Calu3 (cell line): ENCODE measurements at regions of chr17 and their contacts with region 1.

Region 1: GRCh38 chr17:40098846-40099618 is 1.4 kb downstream of the NR1D1 start:
- DNase-seq: peak; percentile 100
- H3K4me3 Mint-ChIP-seq: peak overlapping the region; percentile 80
- H3K27ac Mint-ChIP-seq: peak overlapping the region; percentile 85
- H3K4me1 Mint-ChIP-seq: peaks cover 73% of the 10 kb centered on the region
- H3K27me3 Mint-ChIP-seq: no peaks in the 10 kb centered on the region
- CTCF ChIP-seq: no peak

Region 2: DNA sequence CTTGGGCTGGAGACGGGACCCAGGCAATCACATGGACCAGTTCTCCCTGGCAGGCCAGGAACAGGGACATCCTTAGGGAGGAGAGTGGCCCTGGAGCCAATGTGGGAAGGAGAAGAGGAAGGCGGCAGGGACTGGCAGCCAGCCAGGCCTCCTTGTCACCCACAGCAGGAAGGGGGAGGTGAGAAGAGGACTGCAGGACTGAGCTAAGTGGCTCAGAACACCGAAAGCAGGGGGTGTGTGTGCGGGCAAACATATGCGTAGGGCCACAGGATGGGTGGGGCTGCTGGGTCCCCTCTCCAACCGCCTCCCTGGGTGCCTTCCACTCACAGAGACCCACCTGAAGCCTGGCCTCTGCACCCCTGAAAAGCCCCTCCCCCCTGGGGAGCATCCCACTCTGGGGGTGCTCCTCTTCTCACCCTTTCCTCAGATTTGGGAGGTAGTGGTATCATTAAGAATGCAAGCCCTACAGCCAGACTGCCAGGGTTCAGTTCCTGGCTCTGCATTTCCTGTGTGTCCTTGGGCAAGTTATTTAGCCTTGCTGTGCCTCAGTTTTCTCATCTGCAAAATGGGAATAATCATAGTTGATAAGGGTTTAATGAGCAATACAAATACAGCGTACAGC is 422.7 kb before region 1 on chr17:
- CTCF ChIA-PET with region 1: interaction called, 11 read pairs
- intact Hi-C with region 1: no loop called
- DNase-seq: peak; percentile 100
- H3K4me3 Mint-ChIP-seq: peak overlapping the region; percentile 3
- H3K27ac Mint-ChIP-seq: peak overlapping the region; percentile 62
- H3K4me1 Mint-ChIP-seq: peaks cover 91% of the 10 kb centered on the region
- H3K27me3 Mint-ChIP-seq: peaks cover 6% of the 10 kb centered on the region
- CTCF ChIP-seq: no peak

Region 3: DNA sequence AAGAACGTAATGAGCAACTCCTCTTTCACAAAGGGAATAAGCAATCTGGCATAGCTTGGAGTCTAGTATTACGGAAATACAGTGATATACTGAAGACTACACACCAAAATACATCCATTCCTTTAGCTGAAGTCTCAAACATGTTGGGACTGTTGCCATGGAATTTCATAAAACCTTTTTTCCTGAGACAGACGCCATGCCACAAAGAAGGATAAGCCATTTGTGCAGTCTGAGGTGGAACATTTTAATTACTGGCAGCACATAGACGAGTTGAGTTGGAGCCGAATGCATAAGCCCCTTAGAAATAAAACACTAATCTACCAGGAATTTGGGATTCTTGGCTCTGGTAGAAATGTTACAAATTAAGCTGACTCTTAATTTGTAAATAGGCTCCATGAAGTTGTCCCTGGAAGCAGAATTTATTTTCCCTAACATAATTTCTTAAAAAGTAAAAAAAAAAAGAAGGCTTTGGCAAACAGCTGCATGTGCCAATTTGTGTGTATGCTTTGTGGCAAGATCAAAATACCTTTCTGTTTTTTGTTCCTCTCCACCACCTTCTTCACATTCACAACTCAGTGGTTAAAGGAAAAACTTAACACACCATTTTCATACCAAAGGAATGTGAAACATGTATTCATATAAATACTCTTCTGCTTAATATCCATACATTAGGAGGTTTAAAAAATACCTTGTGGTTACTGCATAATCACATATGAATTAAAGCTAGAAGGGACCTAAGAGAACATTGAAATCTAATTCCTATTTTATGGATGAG is 335.8 kb before region 1 on chr17:
- CTCF ChIA-PET with region 1: no interaction called
- intact Hi-C with region 1: no loop called
- DNase-seq: no peak
- H3K4me3 Mint-ChIP-seq: no peak overlapping the region
- H3K27ac Mint-ChIP-seq: no peak overlapping the region
- H3K4me1 Mint-ChIP-seq: peaks cover 12% of the 10 kb centered on the region
- H3K27me3 Mint-ChIP-seq: peaks cover 26% of the 10 kb centered on the region
- CTCF ChIP-seq: no peak

Region 4: DNA sequence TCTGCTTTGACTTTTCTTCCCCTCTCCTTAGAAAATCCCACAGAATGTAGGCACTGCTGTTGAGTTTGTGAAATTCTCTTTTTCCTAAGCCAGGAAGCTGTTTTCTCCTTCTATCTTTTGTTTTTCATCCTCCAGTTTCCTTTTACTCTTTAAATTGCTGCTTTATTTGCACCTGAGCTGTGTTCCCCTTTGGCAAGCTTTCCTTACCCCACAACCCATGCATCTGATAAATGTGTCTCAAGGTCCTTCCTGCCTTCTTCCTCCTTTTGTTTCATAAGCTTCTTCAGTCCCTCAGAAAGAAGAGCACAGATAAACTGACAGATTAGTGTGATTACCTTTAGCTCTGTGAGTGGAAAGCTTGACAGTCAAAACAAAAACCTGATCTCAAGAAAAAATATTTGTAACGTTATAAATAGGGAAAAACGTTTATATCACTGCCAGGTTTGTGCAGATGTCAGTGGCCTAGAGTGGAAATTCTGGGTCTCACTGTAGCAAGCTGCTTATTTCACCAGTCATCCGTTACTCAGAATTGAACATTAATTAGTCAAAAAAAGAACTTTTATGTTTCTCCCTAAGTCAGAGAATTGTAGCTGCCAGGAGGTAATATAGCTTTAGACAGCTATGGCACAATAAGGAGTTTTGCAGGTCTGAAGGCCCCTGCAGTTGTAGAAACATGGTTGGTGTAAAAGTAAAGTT is 204.2 kb before region 1 on chr17:
- CTCF ChIA-PET with region 1: interaction called, 10 read pairs
- intact Hi-C with region 1: no loop called
- DNase-seq: peak; percentile 63
- H3K4me3 Mint-ChIP-seq: no peak overlapping the region
- H3K27ac Mint-ChIP-seq: no peak overlapping the region
- H3K4me1 Mint-ChIP-seq: peaks cover 23% of the 10 kb centered on the region
- H3K27me3 Mint-ChIP-seq: peaks cover 15% of the 10 kb centered on the region
- CTCF ChIP-seq: no peak

Region 5: GRCh38 chr17:40026816-40027613 is 72.0 kb before region 1 on chr17:
- CTCF ChIA-PET with region 1: interaction called, 49 read pairs
- intact Hi-C with region 1: no loop called
- DNase-seq: peak; percentile 100
- H3K4me3 Mint-ChIP-seq: no peak overlapping the region
- H3K27ac Mint-ChIP-seq: no peak overlapping the region
- H3K4me1 Mint-ChIP-seq: peaks cover 30% of the 10 kb centered on the region
- H3K27me3 Mint-ChIP-seq: no peaks in the 10 kb centered on the region
- CTCF ChIP-seq: no peak

Region 6: GRCh38 chr17:40062329-40063186 is 36.5 kb before region 1 on chr17 and contains the start of gene THRA:
- CTCF ChIA-PET with region 1: interaction called, 1,006 read pairs
- intact Hi-C with region 1: no loop called
- DNase-seq: peak; percentile 100
- H3K4me3 Mint-ChIP-seq: peak within 1 kb of the TSS; percentile 54
- H3K27ac Mint-ChIP-seq: peak within 1 kb of the TSS; percentile 27
- H3K4me1 Mint-ChIP-seq: peaks cover 55% of the 10 kb centered on the region
- H3K27me3 Mint-ChIP-seq: peaks cover 52% of the 10 kb centered on the region
- CTCF ChIP-seq: no peak
- total RNA-seq, gene THRA: 107 and 133 TPM in 2 replicates

Region 7: DNA sequence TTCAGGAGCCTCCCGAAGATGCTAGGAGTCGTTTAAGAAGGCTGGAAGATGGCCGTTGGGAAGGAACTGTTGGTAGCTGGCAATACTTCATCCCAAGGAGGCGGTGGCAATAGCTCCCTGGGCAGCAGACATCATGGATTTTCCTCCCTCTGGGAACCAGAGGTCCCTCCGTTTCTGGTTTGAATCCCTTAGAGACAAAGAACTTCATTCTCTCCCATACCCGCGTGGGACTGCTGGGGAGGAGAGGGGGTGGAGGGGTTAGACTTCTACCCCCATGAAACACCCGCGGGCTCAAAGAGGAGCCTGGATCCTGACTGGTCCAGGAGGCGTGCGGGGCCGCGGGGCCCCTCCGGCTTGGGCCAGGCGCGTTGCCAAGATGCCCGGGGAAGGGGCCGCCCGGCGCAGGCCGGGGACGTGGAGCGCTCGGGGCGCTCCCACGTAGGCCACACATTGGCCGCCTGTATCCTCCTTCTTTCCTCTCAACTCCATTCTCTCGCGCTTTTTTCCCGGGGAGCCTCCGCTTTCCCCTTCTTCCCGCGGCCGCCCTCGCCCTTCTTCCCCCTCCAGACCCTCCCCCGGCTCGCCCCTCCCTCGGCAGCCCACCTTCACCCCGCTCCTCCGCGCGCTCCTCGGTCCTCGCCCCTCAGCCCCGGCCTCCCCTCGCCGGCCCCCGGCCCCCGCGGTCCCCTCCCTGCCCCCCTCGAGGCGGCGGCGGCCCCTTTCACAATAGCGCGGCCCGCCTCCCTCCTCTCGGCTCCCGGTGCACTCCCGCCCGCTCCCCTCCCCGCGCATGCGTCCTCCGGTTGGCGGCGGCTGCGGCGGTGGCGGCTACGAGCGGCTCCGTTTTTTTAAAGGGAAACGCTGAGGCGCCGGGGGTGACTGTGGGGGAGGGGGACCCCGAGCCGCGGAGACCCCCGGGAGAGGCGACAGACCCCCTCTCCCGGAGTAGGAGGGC is 22.4 kb after region 1 on chr17 and contains the start of gene MSL1:
- CTCF ChIA-PET with region 1: interaction called, 674 read pairs
- intact Hi-C with region 1: no loop called
- DNase-seq: peak; percentile 100
- H3K4me3 Mint-ChIP-seq: peak within 1 kb of the TSS; percentile 86
- H3K27ac Mint-ChIP-seq: peak within 1 kb of the TSS; percentile 53
- H3K4me1 Mint-ChIP-seq: peaks cover 48% of the 10 kb centered on the region
- H3K27me3 Mint-ChIP-seq: no peaks in the 10 kb centered on the region
- CTCF ChIP-seq: no peak
- total RNA-seq, gene MSL1: 505 and 524 TPM in 2 replicates

Region 8: DNA sequence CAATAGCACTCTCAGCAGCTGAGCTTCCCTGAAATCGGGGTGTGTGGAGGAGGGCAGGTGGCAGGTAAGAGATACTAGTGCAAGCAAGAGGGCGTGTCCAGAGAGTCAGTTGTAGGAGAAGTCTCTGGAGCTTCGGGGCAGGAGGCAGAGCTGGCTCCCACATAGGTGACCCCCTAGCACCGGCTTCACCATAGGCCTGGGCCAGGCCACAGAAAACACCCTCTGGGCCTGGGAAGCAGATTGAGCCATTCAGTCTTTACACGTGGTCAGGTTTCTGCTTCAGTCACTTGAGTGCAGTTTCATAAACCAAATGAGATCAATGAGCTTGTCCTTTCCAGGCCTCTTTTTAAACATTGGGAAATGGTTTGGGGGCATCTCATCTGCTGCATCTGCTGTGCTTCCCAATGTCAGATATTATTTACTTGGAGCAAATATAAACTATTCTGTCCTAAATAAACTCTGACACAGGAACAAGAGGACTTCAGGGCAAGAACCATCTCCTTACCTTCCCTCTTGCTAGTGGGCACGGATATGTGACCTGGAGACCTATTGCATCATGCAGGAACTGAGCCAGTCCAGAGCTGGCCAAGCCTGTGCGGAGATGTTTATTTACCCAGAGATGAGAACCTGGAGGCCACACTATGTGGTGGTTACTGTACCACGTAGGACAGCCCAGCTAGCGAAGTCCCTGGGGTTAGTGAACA is 450.1 kb after region 1 on chr17:
- CTCF ChIA-PET with region 1: no interaction called
- intact Hi-C with region 1: no loop called
- DNase-seq: peak; percentile 94
- H3K4me3 Mint-ChIP-seq: no peak overlapping the region
- H3K27ac Mint-ChIP-seq: peak overlapping the region; percentile 5
- H3K4me1 Mint-ChIP-seq: peaks cover 20% of the 10 kb centered on the region
- H3K27me3 Mint-ChIP-seq: peaks cover 30% of the 10 kb centered on the region
- CTCF ChIP-seq: no peak